ENCODE measurements at regions of chr9 and their contacts with region 1.

Region 1: GRCh38 chr9:107557231-107557990 is 67.8 kb upstream of the KLF4 start:
- DNase-seq: peak; percentile 10
- H3K4me3 Mint-ChIP-seq: no peak overlapping the region
- H3K27ac Mint-ChIP-seq: peak overlapping the region; percentile 63
- H3K4me1 Mint-ChIP-seq: peaks cover 14% of the 10 kb centered on the region
- H3K27me3 Mint-ChIP-seq: no peaks in the 10 kb centered on the region
- CTCF ChIP-seq: no peak

Region 2: DNA sequence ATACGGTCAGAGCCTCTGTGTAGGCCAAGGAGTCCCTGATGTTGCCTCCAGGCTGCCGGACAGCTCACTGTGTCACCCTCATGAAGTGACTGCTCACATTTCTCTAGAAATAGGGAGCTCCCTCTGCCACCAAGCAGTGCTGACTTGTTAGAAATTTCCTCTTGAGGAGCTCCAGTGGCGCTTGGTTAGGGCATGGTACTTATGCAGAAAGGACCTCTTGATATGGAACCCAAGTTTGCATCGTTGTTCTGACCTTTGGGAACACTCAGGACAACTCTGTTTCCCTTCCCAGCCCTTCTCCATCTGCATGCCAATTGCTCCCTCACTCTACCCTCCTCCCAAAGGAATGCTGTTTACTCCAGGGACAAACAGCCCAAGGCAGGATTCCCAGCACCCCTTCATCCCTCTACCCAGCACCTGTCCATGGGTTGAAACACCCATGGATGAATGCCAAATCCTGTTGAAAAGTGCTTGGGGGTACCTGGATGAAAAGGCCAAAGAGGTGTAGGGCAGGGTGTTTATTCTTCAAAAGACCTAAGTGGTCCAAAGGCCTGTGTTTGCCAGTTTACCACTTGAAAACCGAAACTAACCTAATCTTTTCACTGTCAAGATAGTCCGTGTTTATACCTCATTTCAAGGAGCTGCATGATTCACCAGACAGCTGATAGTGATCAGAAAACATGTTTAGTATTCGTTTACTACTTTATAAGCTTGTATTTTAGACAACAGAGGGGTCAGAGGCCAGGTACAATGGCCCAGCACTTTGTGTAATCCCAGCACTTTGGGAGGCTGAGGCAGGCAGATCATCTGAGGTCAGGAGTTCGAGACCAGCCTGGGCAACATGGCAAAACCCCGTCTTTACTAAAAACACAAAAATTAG is 119.0 kb before region 1 on chr9:
- CTCF ChIA-PET with region 1: no interaction called
- intact Hi-C with region 1: no loop called
- DNase-seq: no peak
- H3K4me3 Mint-ChIP-seq: no peak overlapping the region
- H3K27ac Mint-ChIP-seq: no peak overlapping the region
- H3K4me1 Mint-ChIP-seq: no peaks in the 10 kb centered on the region
- H3K27me3 Mint-ChIP-seq: peaks cover 12% of the 10 kb centered on the region
- CTCF ChIP-seq: no peak

Region 3: GRCh38 chr9:107504569-107505377 is 52.6 kb before region 1 on chr9:
- CTCF ChIA-PET with region 1: no interaction called
- intact Hi-C with region 1: loop called (anchors 5 kb)
- DNase-seq: peak; percentile 32
- H3K4me3 Mint-ChIP-seq: peak overlapping the region; percentile 32
- H3K27ac Mint-ChIP-seq: peak overlapping the region; percentile 67
- H3K4me1 Mint-ChIP-seq: peaks cover 8% of the 10 kb centered on the region
- H3K27me3 Mint-ChIP-seq: no peaks in the 10 kb centered on the region
- CTCF ChIP-seq: no peak